Endothelial cell of umbilical vein (primary cell): ENCODE measurements at regions of chr6 and their contacts with region 1.

Region 1: GRCh38 chr6:37222125-37222967 is 35.2 kb upstream of the TBC1D22B start:
- DNase-seq: peak; percentile 86
- H3K4me3 ChIP-seq: peak overlapping the region; percentile 8 to 43 (median 31)
- H3K27ac ChIP-seq: no peak overlapping the region
- H3K4me1 ChIP-seq: peaks cover 7% of the 10 kb centered on the region
- H3K27me3 ChIP-seq: no peaks in the 10 kb centered on the region
- CTCF ChIP-seq: no peak
- POLR2A ChIP-seq: no peak

Region 2: DNA sequence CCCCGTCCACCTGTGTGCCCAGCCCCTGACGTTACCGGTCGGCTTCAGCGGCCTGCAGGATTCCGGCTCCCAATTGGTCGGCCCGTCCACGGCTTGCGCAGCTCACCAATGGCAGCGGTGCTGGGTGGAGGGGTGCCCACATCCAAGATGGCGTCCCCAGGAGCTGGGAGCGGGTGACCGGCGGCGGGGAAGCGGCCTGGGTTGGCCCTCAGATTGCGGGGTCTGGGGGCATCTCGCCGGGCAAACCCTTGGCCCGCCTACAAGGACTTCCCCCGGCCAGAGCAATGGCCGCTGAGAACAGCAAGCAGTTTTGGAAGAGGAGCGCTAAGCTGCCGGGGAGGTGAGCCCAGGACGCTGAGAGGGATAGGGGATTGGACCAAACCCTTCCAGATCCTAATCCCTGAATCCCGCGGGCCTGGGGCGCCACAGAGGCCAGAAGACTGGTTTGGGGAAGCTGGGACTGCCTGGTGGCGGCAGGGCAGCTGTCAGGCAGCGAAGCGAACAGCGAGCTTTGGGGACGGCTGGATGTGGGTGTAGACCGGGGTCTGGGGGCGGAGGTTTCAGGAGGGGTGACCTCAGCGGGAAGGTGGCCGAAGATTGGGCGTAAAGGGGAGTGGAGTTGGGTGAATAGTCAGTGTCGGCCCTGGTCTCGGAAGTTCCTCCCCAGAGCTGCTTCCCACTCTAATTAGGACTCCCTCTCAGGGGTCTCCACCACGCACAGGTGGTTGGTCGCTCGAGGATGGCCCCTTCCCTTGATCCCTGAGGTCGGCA is 35.5 kb after region 1 on chr6 and contains the starts of genes TBC1D22B and TMEM217:
- CTCF ChIA-PET with region 1: interaction called, 3 read pairs
- POLR2A ChIA-PET with region 1: interaction called, 3 read pairs
- dilution Hi-C with region 1: no loop called
- intact Hi-C with region 1: loop called (anchors 2 kb)
- DNase-seq: peak; percentile 96
- H3K4me3 ChIP-seq: peak within 1 kb of the TSS; percentile 70 to 98 (median 80)
- H3K27ac ChIP-seq: peak within 1 kb of the TSS; percentile 97
- H3K4me1 ChIP-seq: peaks cover 22% of the 10 kb centered on the region
- H3K27me3 ChIP-seq: no peaks in the 10 kb centered on the region
- CTCF ChIP-seq: no peak
- POLR2A ChIP-seq: peak; percentile 64
- total RNA-seq, gene TBC1D22B: 12.7 and 13.6 TPM in 2 replicates
- total RNA-seq, gene TMEM217: 6.5 and 6.8 TPM in 2 replicates

Region 3: DNA sequence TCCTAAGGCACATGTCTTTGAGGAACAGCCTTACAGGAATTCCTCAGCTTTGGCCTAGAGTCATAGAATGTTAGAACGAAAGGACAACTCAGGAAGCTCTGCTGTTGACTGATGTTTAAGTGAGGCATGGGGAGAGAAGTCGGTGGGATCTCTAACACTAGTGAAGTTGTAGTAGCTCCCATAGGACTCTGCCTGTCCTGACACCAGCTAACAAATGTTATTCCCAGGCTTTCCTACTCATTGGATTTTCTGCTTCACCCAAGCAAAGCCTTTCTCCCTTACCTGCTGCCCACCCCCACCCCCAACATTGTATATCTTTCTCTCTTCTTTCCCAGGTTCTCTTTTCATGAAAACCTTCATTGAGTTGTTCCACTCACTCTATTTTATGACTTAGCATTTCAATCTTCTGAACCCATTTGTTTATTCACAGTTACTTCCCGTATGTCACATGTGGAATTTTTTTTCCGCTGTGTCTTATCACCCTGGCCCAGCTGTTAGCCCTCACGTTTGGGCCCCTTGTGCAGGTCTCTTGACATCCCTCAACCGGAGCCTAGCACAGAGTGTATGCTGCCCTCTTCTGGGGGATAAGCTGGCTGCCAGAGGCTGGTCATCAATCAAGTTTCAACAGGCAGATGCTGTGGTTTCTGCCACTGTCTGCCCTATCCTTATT is 92.3 kb after region 1 on chr6:
- CTCF ChIA-PET with region 1: no interaction called
- POLR2A ChIA-PET with region 1: no interaction called
- dilution Hi-C with region 1: no loop called
- intact Hi-C with region 1: loop called (anchors 2 kb)
- DNase-seq: peak; percentile 93
- H3K4me3 ChIP-seq: no peak overlapping the region
- H3K27ac ChIP-seq: peak overlapping the region; percentile 34
- H3K4me1 ChIP-seq: no peaks in the 10 kb centered on the region
- H3K27me3 ChIP-seq: no peaks in the 10 kb centered on the region
- CTCF ChIP-seq: peak; percentile 64 to 78
- POLR2A ChIP-seq: no peak